MCF 10A (cell line): ENCODE measurements at regions of chr11 and their contacts with region 1.

Region 1: DNA sequence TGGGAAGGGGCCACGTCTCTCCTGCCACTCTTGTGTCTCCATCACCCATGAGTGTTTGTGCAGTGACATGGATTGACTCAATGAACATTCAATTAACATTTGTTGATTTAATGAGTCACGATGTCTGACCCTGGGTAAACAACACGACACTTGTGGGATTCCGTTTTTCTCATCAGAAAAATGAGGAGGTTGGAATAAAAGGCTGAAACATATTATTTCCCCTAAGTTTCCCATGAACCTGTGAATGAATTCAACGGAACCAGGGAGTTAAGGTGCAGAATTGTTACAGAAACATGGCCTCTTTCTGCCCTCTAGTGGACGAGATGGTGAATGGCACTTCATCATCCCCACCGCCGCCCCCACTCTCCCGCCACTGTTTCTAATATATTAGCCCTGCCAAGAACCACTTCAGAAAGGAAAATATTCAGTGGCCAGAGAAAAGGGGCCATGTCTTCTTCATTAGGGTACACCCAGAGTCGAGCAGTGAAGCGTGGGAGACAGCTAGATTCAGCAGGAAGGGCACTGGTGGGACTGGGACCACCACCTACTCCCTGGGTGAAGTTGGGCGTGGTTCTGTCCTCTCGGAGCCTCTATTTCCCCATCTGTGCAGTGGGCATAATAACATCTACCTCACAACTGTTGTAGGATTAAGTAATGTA is 46.3 kb upstream of the SYT13 start:
- DNase-seq: peak; percentile 52
- H3K4me3 Mint-ChIP-seq: no peak overlapping the region
- H3K27ac Mint-ChIP-seq: no peak overlapping the region
- H3K4me1 Mint-ChIP-seq: peaks cover 6% of the 10 kb centered on the region
- H3K27me3 Mint-ChIP-seq: peaks cover 20% of the 10 kb centered on the region
- CTCF ChIP-seq: peak; percentile 84

Region 2: GRCh38 chr11:45252134-45252855 is 80.1 kb before region 1 on chr11:
- CTCF ChIA-PET with region 1: interaction called, 3 read pairs
- POLR2A ChIA-PET with region 1: no interaction called
- intact Hi-C with region 1: loop called (anchors 1 kb)
- DNase-seq: peak; percentile 73
- H3K4me3 Mint-ChIP-seq: no peak overlapping the region
- H3K27ac Mint-ChIP-seq: no peak overlapping the region
- H3K4me1 Mint-ChIP-seq: no peaks in the 10 kb centered on the region
- H3K27me3 Mint-ChIP-seq: peaks cover 14% of the 10 kb centered on the region
- CTCF ChIP-seq: peak; percentile 87

Region 3: GRCh38 chr11:45294499-45294898 is 37.9 kb before region 1 on chr11:
- CTCF ChIA-PET with region 1: interaction called, 14 read pairs
- POLR2A ChIA-PET with region 1: no interaction called
- intact Hi-C with region 1: loop called (anchors 1 kb)
- DNase-seq: no peak
- H3K4me3 Mint-ChIP-seq: no peak overlapping the region
- H3K27ac Mint-ChIP-seq: no peak overlapping the region
- H3K4me1 Mint-ChIP-seq: peaks cover 3% of the 10 kb centered on the region
- H3K27me3 Mint-ChIP-seq: peaks cover 15% of the 10 kb centered on the region
- CTCF ChIP-seq: no peak

Region 4: DNA sequence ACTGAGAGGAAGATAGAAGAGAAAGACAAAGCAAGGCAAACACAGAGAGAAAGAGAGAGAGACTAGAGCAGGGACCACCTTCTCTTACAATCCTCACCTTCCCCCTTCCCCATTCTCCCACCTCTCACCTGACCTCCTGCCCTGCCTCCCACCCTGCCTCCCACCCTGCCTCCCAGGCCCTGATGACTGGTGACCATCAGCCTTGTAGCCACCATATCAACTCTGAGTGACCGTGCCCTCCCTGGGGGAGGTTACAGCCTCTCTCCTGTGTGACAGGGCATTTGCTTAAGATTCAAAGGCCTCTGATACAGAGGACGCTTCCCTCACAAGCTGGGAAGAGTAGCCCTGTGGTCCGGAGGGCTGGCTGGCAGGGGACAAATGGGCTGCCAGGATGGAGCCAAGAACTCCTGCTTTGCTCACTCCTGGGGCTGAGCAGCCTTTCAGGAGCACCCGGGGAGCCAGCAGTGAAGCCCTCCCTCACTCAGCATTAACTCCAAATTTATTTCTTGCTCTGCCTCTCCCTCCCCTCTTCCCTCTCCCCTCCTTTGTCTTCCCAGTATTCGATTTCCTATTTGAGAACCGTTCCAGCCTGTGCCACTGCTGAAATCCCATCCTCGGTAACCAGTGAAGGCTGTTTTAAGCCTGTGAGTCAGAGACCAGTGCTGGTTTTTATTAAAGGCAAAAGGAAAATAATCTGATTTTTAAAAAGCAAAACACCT is 79.0 kb after region 1 on chr11:
- CTCF ChIA-PET with region 1: no interaction called
- POLR2A ChIA-PET with region 1: no interaction called
- intact Hi-C with region 1: no loop called
- DNase-seq: no peak
- H3K4me3 Mint-ChIP-seq: no peak overlapping the region
- H3K27ac Mint-ChIP-seq: no peak overlapping the region
- H3K4me1 Mint-ChIP-seq: no peaks in the 10 kb centered on the region
- H3K27me3 Mint-ChIP-seq: peaks cover 53% of the 10 kb centered on the region
- CTCF ChIP-seq: no peak

Region 5: GRCh38 chr11:45457649-45458048 is 125.2 kb after region 1 on chr11:
- CTCF ChIA-PET with region 1: no interaction called
- POLR2A ChIA-PET with region 1: no interaction called
- intact Hi-C with region 1: no loop called
- DNase-seq: peak; percentile 87
- H3K4me3 Mint-ChIP-seq: no peak overlapping the region
- H3K27ac Mint-ChIP-seq: no peak overlapping the region
- H3K4me1 Mint-ChIP-seq: peaks cover 13% of the 10 kb centered on the region
- H3K27me3 Mint-ChIP-seq: peaks cover 46% of the 10 kb centered on the region
- CTCF ChIP-seq: no peak

Region 6: GRCh38 chr11:45485070-45485707 is 152.8 kb after region 1 on chr11:
- CTCF ChIA-PET with region 1: no interaction called
- POLR2A ChIA-PET with region 1: no interaction called
- intact Hi-C with region 1: no loop called
- DNase-seq: no peak
- H3K4me3 Mint-ChIP-seq: no peak overlapping the region
- H3K27ac Mint-ChIP-seq: no peak overlapping the region
- H3K4me1 Mint-ChIP-seq: no peaks in the 10 kb centered on the region
- H3K27me3 Mint-ChIP-seq: peaks cover 37% of the 10 kb centered on the region
- CTCF ChIP-seq: no peak